Activated CD4-positive, alpha-beta T cell treated with anti-CD3 and anti-CD28 coated beads for 36 hours (primary cell): ENCODE measurements at regions of chr13 and their contacts with region 1.

Region 1: DNA sequence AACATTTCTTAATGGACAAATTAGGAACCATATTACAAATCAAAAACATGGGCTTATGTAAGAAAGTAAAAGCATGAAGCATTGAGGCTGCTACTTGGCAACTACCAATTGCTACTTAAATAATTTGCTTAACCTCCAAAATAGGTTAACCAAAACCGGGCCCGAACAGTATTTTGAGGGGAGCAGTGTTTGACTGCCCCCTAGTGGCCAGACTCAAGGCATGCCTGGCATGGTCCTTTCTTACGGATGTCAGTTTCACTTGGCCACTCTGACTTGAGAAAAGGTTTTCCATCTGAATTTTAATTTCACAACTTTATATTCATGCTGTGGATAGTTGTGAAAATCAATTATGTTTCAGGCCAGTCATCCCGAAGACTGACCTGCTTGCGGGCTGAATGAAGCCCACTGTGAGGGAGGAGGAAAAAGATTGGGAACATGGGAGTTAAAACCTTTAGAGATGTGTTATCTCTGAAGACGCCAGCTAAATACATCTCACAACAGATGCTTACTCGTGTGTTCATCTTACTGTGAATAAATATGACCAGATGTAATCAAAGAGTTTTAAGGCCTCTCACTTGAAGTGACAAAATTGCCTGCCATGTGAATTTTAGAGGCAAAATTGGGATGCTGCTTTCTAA is 2.9 kb downstream of the RXFP2 start:
- DNase-seq: peak; percentile 81
- ATAC-seq: peak; percentile 66
- H3K4me3 Mint-ChIP-seq: no peak overlapping the region
- H3K27ac Mint-ChIP-seq: no peak overlapping the region
- H3K4me1 Mint-ChIP-seq: peaks cover 2% of the 10 kb centered on the region
- H3K27me3 Mint-ChIP-seq: peaks cover 4% of the 10 kb centered on the region

Region 2: DNA sequence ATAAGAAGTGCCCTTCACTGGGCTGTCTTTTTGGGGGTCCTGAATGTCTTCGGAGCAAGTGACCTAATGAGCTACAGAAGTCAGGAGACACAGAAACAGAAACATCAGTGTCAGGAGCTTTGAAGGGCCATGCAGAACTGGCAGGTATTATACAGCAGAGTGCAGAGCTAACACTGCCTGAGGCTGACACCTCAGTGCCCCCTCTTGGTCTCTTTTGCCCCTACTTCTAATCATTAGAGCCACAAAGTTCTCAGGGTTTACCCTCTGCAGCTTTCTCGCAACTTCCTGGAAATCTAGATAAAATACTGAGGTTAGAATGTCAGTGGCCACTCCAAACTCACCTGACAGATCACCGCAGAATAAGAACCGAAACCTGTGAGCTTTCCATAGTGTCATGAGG is 369.8 kb before region 1 on chr13:
- CTCF ChIA-PET with region 1: no interaction called
- POLR2A ChIA-PET with region 1: no interaction called
- intact Hi-C with region 1: no loop called
- DNase-seq: no peak
- ATAC-seq: no peak
- H3K4me3 Mint-ChIP-seq: no peak overlapping the region
- H3K27ac Mint-ChIP-seq: no peak overlapping the region
- H3K4me1 Mint-ChIP-seq: no peaks in the 10 kb centered on the region
- H3K27me3 Mint-ChIP-seq: peaks cover 3% of the 10 kb centered on the region

Region 3: GRCh38 chr13:31431722-31432137 is 310.5 kb before region 1 on chr13:
- CTCF ChIA-PET with region 1: interaction called, 12 read pairs
- POLR2A ChIA-PET with region 1: no interaction called
- intact Hi-C with region 1: loop called (anchors 1 kb)
- DNase-seq: peak; percentile 70
- ATAC-seq: no peak
- H3K4me3 Mint-ChIP-seq: no peak overlapping the region
- H3K27ac Mint-ChIP-seq: no peak overlapping the region
- H3K4me1 Mint-ChIP-seq: no peaks in the 10 kb centered on the region
- H3K27me3 Mint-ChIP-seq: peaks cover 5% of the 10 kb centered on the region